Right lobe of liver (tissue), 6 donors: ENCODE measurements at regions of chr11 and their contacts with region 1.

Region 1: GRCh38 chr11:66408488-66409214 is 12.2 kb upstream of the NPAS4 start:
- DNase-seq: peak; percentile 83 to 89 (median 84)
- ATAC-seq: peak; percentile 93 to 99 (median 97)
- H3K4me3 ChIP-seq: peak overlapping the region in 1 of 3 donors; percentile 11
- H3K27ac ChIP-seq: no peak overlapping the region
- H3K4me1 ChIP-seq: no peaks in the 10 kb centered on the region
- H3K27me3 ChIP-seq: no peaks in the 10 kb centered on the region
- CTCF ChIP-seq: peak; percentile 99 to 100 (median 100)
- POLR2A ChIP-seq: no peak

Region 2: GRCh38 chr11:66438504-66439466 is 30.1 kb after region 1 on chr11 and contains the start of gene MRPL11:
- intact Hi-C with region 1: loop called in 1 of 2 experiments (anchors 5 kb)
- DNase-seq: peak; percentile 88 to 92 (median 91)
- ATAC-seq: peak; percentile 100
- H3K4me3 ChIP-seq: peak within 1 kb of the TSS; percentile 81 to 95 (median 86)
- H3K27ac ChIP-seq: peak within 1 kb of the TSS; percentile 45 to 93 (median 88)
- H3K4me1 ChIP-seq: peaks cover 0 to 7% (median 0%) of the 10 kb centered on the region in 4 donors
- H3K27me3 ChIP-seq: no peaks in the 10 kb centered on the region
- CTCF ChIP-seq: peak; percentile 22 to 82 (median 78)
- POLR2A ChIP-seq: no peak
- total RNA-seq, gene MRPL11: 17.6 to 34.1 (median 28.6) TPM

Region 3: DNA sequence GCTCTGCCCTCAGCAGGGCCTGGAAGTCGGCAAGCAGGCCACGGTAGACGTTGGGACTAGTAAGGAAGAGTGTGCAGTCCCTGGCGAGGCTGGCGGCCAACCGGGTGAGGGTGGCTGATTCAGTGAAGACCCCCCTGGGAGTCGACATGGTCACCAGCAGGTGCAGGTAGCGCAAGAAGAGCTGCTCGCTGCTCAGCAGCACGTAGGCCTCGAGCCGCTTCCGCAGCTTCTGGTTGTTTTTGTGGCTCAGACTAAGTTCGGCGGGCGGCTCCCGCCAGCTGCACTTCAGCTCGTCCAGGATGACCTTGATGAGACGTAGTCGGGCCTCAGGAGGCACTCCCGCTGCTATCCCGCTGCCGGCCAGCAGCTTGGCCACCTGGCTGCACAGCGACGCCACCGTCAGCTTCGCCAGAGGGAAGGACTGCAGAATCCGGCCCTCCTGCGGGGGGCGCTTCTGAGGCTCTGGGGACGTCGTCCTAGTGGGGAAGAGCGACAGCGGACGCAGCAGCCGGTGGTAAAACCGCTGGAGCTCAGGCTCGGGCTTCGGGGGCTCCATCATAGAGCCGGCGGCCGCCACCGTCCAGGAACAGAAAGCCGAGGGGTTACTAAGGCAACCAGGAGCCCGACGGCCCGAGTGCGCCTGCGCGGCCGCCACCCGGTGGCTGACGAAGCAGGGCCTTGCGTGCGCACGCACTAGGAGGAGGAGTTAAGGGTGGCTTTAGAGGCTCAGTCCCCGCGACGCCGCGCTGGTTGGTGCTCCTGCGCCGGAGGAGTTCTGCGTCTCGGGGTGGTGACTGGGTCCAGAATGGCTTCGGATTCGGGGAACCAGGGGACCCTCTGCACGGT is 184.0 kb after region 1 on chr11 and contains the starts of genes CCDC87 and CCS:
- intact Hi-C with region 1: no loop called
- DNase-seq: peak; percentile 99
- ATAC-seq: peak; percentile 92 to 95 (median 94)
- H3K4me3 ChIP-seq: peak within 1 kb of the TSS; percentile 61 to 84 (median 71)
- H3K27ac ChIP-seq: peak within 1 kb of the TSS; percentile 66 to 90 (median 86)
- H3K4me1 ChIP-seq: peaks cover 0 to 43% (median 2%) of the 10 kb centered on the region in 4 donors
- H3K27me3 ChIP-seq: no peaks in the 10 kb centered on the region
- CTCF ChIP-seq: peak; percentile 52 to 73 (median 58)
- POLR2A ChIP-seq: peak; percentile 89
- total RNA-seq, gene CCDC87: 0.07 to 0.37 (median 0.12) TPM in 5 of 6 experiments, not detected in the other
- total RNA-seq, gene CCS: 22.6 to 54.2 (median 34.3) TPM

Region 4: DNA sequence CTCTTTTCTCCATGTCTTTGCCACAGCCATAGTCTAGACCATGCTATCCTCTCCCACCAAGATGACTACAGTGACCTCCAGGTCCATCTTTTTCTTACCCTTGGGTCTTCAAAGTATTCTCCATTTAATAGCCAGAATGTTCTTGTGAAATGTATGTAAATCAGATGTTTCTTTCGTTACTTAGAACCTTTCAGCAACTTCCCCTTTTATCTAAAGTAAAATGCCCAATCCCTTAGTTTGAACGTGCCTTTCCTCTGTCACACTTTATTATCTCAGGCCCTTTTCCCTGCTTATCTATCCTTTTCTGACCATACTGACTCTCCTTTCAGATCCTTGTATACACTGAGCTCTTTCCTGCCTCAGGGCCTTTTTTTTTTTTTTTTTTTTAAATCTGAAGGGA is 251.1 kb after region 1 on chr11:
- intact Hi-C with region 1: loop called in 1 of 2 experiments (anchors 10 kb)
- DNase-seq: no peak
- ATAC-seq: no peak
- H3K4me3 ChIP-seq: no peak overlapping the region
- H3K27ac ChIP-seq: no peak overlapping the region
- H3K4me1 ChIP-seq: no peaks in the 10 kb centered on the region
- H3K27me3 ChIP-seq: no peaks in the 10 kb centered on the region
- CTCF ChIP-seq: no peak
- POLR2A ChIP-seq: no peak